ENCODE measurements at regions of chr1 and their contacts with region 1.

Region 1: DNA sequence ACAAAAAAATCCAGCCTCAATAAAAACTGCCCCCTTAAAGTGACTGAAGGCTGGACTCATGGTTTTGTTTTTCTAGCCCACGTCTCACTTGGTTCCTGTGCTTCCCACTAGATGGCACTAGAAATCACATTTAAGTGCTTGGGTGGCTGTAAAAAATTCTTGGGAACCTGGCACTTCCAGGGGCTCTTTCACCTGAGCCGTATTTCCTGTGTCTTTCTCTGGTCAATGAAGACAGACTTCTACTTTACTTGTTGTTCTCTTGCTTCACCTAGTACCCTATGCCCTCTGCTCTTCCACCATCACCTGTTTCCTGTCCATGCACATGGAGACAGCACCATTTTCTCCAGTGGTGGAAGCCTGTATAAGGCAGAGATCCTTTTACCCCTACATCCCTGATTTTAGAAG is 20.0 kb downstream of the METTL13 start:
- DNase-seq: peak in 1 of 35 experiments; percentile 56
- ATAC-seq: peak in 2 of 4 experiments; percentile 31 to 40
- H3K4me3 ChIP-seq: no peak overlapping the region
- H3K4me3 Mint-ChIP-seq: no peak overlapping the region
- H3K27ac ChIP-seq: no peak overlapping the region
- H3K27ac Mint-ChIP-seq: no peak overlapping the region
- H3K4me1 ChIP-seq: no peaks in the 10 kb centered on the region
- H3K4me1 Mint-ChIP-seq: peaks cover 2 to 8% (median 8%) of the 10 kb centered on the region in 3 donors
- H3K27me3 ChIP-seq: no peaks in the 10 kb centered on the region
- H3K27me3 Mint-ChIP-seq: no peaks in the 10 kb centered on the region

Region 2: DNA sequence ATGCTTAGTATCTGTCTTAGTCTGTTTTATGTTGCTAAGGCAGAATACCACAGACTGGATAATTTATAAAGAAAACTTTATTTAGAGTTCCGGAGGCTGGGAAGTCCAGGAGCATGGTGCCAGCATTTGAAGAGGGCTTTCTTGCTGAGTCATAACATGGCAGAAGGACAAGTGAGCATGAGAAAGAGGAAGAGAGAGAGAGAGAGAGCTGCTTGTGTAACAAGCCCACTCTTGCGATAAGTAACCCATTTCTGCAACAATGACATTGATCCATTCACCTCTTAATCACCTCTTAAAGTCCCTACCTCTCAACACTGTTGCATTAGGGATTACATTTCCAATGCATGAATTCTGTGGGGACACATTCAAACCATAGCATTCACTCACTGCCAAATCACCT is 191.1 kb before region 1 on chr1:
- CTCF ChIA-PET with region 1: no interaction called
- POLR2A ChIA-PET with region 1: interaction called in 1 of 2 experiments, 12 read pairs
- DNase-seq: no peak
- ATAC-seq: no peak
- H3K4me3 ChIP-seq: no peak overlapping the region
- H3K4me3 Mint-ChIP-seq: no peak overlapping the region
- H3K27ac ChIP-seq: no peak overlapping the region
- H3K27ac Mint-ChIP-seq: no peak overlapping the region
- H3K4me1 ChIP-seq: no peaks in the 10 kb centered on the region
- H3K4me1 Mint-ChIP-seq: no peaks in the 10 kb centered on the region
- H3K27me3 ChIP-seq: no peaks in the 10 kb centered on the region
- H3K27me3 Mint-ChIP-seq: no peaks in the 10 kb centered on the region

Region 3: GRCh38 chr1:171984850-171985485 is 183.5 kb after region 1 on chr1:
- CTCF ChIA-PET with region 1: interaction called, 15 to 30 read pairs
- POLR2A ChIA-PET with region 1: no interaction called
- DNase-seq: peak in 4 of 35 experiments; percentile 2 to 59 (median 9)
- ATAC-seq: peak in 3 of 4 experiments; percentile 48 to 55 (median 50)
- H3K4me3 ChIP-seq: no peak overlapping the region
- H3K4me3 Mint-ChIP-seq: no peak overlapping the region
- H3K27ac ChIP-seq: no peak overlapping the region
- H3K27ac Mint-ChIP-seq: no peak overlapping the region
- H3K4me1 ChIP-seq: no peaks in the 10 kb centered on the region
- H3K4me1 Mint-ChIP-seq: peaks cover 0 to 3% (median 2%) of the 10 kb centered on the region in 3 donors
- H3K27me3 ChIP-seq: no peaks in the 10 kb centered on the region
- H3K27me3 Mint-ChIP-seq: peaks cover 0 to 2% of the 10 kb centered on the region in 2 donors

Measured in T-cell (primary cell).